ENCODE measurements at regions of chr6 and their contacts with region 1.

Region 1: DNA sequence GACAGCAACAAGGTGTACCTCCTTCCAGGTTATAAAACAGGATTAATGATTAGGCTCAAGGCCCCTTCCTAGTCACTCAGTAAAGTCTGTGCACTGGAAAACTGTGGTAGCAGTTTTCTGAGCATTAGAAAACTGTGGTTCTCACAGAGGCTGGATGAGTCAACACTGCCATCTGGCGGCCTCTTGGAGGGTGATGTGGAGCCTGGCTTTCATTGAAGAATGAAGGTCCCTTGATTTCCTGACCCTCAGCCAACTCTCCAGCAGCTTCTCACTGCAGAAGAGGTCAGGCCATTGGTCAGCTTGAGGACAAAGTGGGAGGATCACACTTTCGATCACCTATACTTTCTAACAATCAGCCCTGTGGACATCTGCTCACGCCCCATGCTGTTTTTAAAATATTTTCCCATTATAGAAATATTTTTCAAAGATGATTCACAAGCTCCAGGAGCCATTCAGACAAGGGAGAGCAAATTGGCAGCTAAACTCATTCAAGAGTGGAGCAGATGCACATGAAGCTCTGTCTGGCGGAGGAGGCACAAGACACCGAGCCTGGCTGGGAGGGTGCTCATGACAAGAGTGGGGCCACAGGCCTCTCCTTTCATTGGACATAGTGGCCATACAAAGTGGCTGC is 23.2 kb downstream of the PSMB1 start:
- DNase-seq: peak; percentile 65 to 73
- H3K4me3 ChIP-seq: no peak overlapping the region
- H3K27ac ChIP-seq: no peak overlapping the region
- H3K4me1 ChIP-seq: no peaks in the 10 kb centered on the region
- H3K27me3 ChIP-seq: no peaks in the 10 kb centered on the region
- CTCF ChIP-seq: peak; percentile 72 to 79

Region 2: DNA sequence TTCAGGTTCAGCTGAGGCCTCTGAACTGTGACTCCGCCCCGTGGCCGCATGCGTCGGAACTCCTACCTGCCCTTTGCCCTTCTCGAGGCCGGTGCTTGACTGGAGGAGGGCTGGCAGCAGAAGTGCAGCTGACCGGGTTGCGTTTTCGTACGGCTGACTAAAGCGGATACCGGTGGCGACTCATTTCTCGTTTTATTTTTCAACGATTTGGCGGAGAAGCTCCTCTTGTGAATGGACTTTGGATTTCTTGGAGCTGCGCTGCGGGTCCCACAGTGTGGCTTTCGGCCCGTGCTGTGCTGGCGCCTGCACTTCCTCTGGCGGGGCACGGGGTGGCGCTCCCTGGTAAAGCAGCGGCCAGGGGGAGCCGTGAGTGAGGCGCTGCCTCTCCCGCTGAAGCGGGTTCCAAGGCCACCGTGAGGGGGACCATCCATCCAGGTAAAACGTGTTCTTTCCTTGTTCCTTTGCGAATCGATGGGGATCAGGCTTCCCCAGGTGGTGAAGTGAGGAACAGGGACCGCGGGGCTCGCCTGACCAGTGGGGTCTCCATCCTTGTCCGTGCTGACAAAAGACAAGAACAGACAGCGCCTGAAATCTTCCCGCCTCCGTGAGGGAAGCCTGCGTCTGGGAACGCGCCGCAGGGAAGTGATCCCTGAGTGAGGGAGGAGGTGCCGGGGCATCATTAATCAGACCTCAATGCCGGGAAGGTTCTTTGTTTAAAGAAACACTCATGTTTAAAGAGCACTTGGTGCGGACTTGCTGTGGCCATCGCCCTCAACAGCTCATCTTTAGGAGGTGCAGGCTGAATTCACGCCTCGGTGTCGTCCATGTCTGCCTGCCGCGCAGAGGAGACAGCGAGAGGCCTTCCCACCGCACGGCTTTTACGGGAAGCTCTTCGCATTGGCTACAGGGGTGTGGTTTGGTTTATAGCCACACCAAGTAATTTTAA is 739.7 kb before region 1 on chr6:
- intact Hi-C with region 1: loop called (anchors 5 kb)
- DNase-seq: peak; percentile 55 to 82
- H3K4me3 ChIP-seq: peak overlapping the region; percentile 47 to 55
- H3K27ac ChIP-seq: peak overlapping the region; percentile 55 to 61
- H3K4me1 ChIP-seq: peaks cover 0 to 14% (median 5%) of the 10 kb centered on the region in 4 donors
- H3K27me3 ChIP-seq: peaks cover 0 to 5% of the 10 kb centered on the region in 2 donors
- CTCF ChIP-seq: peak; percentile 93 to 98

Region 3: GRCh38 chr6:169831450-169832246 is 698.3 kb before region 1 on chr6:
- intact Hi-C with region 1: loop called (anchors 5 kb)
- DNase-seq: peak in 1 of 2 donors; percentile 41
- H3K4me3 ChIP-seq: no peak overlapping the region
- H3K27ac ChIP-seq: no peak overlapping the region
- H3K4me1 ChIP-seq: peaks cover 0 to 3% (median 0%) of the 10 kb centered on the region in 4 donors
- H3K27me3 ChIP-seq: peaks cover 0 to 35% of the 10 kb centered on the region in 2 donors
- CTCF ChIP-seq: peak; percentile 84 to 86

Region 4: DNA sequence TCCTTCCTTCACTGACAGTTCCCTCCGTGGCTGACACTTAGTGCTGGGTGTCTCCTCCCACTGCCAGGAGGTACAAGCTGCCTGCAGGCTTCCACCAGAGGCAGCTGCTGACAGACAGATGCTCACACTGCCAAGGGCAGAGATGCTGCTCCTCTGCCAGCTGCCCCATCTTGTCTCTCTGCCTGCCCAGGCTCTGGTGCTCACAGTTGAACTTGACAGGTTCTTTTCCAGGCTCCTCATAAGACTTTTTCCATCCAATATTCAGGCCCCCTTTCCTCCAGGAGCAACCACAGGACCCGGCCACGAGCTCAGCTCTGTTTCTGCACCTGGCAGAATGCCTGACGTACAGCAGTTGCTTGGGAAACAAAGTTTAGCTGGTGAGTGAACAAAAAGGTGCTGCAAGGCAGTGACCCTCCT is 56.6 kb before region 1 on chr6:
- intact Hi-C with region 1: no loop called
- DNase-seq: no peak
- H3K4me3 ChIP-seq: no peak overlapping the region
- H3K27ac ChIP-seq: no peak overlapping the region
- H3K4me1 ChIP-seq: no peaks in the 10 kb centered on the region
- H3K27me3 ChIP-seq: peaks cover 0 to 7% of the 10 kb centered on the region in 2 donors
- CTCF ChIP-seq: no peak

Region 5: DNA sequence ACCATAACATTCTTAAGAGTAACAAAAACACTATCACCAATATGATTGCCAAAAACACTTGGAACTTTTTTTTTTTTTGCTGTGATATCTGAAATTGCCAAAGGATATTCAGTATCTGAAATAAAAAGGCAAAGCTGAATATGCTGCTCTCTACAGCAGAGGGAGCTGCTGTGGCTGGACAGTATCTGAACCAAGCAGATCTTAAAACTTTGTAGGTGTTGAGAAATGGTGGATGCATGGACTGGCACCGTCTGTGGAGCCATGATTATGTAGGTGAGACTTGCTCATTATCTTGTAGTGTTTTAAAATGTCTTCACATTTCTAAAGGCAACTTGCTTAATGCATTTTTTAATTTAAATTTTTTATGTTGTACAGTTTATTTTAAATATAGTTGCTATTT is 45.3 kb after region 1 on chr6:
- intact Hi-C with region 1: no loop called
- DNase-seq: no peak
- H3K4me3 ChIP-seq: no peak overlapping the region
- H3K27ac ChIP-seq: no peak overlapping the region
- H3K4me1 ChIP-seq: no peaks in the 10 kb centered on the region
- H3K27me3 ChIP-seq: no peaks in the 10 kb centered on the region
- CTCF ChIP-seq: no peak